Common myeloid progenitor, CD34-positive (primary cell): ENCODE measurements at regions of chr2 and their contacts with region 1.

Region 1: DNA sequence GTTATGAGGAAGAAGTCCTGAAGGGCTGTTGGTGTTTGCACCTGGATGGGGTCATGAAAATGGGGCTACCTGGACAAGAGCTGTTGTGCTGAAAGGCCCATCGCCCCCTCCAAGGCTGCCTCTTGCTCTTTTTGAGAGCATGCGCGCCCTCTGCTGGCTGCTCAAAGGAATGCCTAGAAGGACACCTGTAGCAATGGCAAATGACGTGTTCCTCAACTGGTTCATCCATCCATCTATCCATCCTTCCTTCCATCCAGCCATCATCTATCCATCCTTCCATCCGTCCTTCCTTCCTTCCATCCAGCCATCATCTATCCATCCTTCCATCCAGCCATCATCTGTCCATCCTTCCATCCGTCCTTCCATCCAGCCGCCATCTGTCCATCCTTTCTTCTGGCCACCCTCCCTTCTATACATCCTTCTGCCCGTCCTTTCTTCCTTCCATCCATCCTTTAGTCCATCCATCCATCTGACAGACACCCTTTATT is 17.2 kb upstream of the RPL31 start:
- DNase-seq: peak; percentile 78 to 85 (median 79)
- H3K4me3 ChIP-seq: no peak overlapping the region
- H3K27ac ChIP-seq: no peak overlapping the region
- H3K4me1 ChIP-seq: no peaks in the 10 kb centered on the region
- H3K27me3 ChIP-seq: no peaks in the 10 kb centered on the region

Region 2: DNA sequence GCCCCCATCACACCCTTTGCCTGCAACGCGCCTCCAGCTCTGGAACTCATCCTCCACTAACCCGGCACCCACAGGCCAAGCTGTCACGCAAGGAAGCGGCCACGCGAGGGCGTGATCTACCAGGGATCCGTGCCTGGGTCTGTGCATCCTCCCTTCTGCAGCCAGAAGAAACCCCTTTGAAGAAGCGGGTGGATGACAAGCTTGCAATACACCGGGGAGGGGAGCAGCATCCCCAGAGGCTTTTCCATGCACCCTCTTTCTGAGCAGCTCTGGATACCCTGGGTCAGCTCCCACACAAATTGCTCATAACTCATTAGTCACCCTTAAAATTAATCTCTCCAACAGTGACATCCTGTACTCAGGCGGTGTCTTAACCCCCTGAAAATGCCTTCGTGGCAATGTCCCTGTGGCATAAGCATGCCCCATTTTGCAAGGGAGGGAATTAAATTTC is 374.5 kb before region 1 on chr2:
- CTCF ChIA-PET with region 1: interaction called, 13 read pairs
- POLR2A ChIA-PET with region 1: no interaction called
- DNase-seq: peak; percentile 48 to 68 (median 65)
- H3K4me3 ChIP-seq: no peak overlapping the region
- H3K27ac ChIP-seq: no peak overlapping the region
- H3K4me1 ChIP-seq: no peaks in the 10 kb centered on the region
- H3K27me3 ChIP-seq: no peaks in the 10 kb centered on the region

Region 3: GRCh38 chr2:101577173-101577572 is 592.2 kb after region 1 on chr2:
- CTCF ChIA-PET with region 1: no interaction called
- POLR2A ChIA-PET with region 1: no interaction called
- DNase-seq: no peak
- H3K4me3 ChIP-seq: no peak overlapping the region
- H3K27ac ChIP-seq: no peak overlapping the region
- H3K4me1 ChIP-seq: no peaks in the 10 kb centered on the region
- H3K27me3 ChIP-seq: no peaks in the 10 kb centered on the region